Activated CD4-positive, alpha-beta T cell treated with anti-CD3 and anti-CD28 coated beads, Interleukin-2, amount 10 ng/mL, durations not matched to agents 24 days and 14 days (primary cell): ENCODE measurements at regions of chr10 and their contacts with region 1.

Region 1: GRCh38 chr10:60521974-60522405 is 132.3 kb upstream of the ANK3 start:
- DNase-seq: no peak
- H3K4me3 Mint-ChIP-seq: no peak overlapping the region
- H3K27ac Mint-ChIP-seq: peak overlapping the region; percentile 46
- H3K4me1 Mint-ChIP-seq: peaks cover 12% of the 10 kb centered on the region
- H3K27me3 Mint-ChIP-seq: no peaks in the 10 kb centered on the region

Region 2: GRCh38 chr10:60444494-60445064 is 77.4 kb before region 1 on chr10:
- intact Hi-C with region 1: loop called (anchors 5 kb)
- DNase-seq: no peak
- H3K4me3 Mint-ChIP-seq: no peak overlapping the region
- H3K27ac Mint-ChIP-seq: no peak overlapping the region
- H3K4me1 Mint-ChIP-seq: peaks cover 8% of the 10 kb centered on the region
- H3K27me3 Mint-ChIP-seq: no peaks in the 10 kb centered on the region